ENCODE measurements at regions of chr5 and their contacts with region 1.

Region 1: DNA sequence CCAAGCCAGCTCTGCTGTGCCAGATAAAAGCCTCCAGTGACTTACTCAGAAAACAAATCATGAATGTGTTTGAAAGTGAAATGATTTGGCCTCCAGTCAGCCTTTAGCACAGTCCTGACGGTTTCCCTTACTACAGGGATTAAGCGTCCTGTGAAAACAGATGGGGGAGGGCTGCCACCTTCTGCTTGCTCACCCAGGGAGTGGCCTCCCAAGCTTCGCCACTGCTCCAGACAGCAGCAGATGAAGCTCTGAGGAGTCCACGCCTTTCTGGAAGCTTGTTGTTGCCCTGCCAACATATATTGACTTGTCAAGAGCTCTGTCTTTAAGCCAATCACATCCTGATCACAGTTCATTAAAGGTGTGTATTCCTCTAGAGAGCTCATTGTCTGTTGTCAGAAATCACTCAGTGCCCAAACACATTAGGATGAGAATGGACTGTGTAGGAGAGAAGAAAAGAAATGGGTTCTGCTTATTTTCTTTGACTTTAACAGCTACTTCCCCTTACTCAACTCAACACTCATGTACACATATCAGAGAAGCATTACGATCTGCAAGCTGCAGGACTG is 4.9 kb upstream of the FYB1 start:
- DNase-seq: peak in 1 of 4 donors; percentile 48
- ATAC-seq: no peak
- H3K4me3 ChIP-seq: no peak overlapping the region
- H3K27ac ChIP-seq: peak overlapping the region in 1 of 4 donors; percentile 42
- H3K4me1 ChIP-seq: no peaks in the 10 kb centered on the region
- H3K27me3 ChIP-seq: no peaks in the 10 kb centered on the region
- CTCF ChIP-seq: no peak
- POLR2A ChIP-seq: no peak

Region 2: DNA sequence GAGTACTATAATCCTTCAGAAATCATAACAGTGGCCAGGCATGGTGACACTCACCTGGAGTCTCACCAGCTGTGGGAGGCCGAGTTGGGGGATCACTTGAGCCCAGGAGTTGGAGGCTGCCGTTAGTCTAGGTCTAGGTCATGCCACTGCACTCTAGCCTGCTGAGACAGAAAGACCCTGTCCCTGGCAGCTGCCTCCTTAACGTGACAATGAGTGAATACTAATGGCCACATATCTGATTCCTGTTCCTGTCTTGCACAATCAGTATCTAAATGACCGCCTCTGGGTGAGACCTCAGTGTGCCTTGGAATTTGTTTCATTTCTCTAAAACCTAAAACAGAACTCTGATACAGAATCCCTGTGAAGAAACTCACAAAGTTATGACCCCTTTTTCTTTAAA is 331.5 kb after region 1 on chr5:
- intact Hi-C with region 1: loop called (anchors 10 kb)
- DNase-seq: peak in 1 of 4 donors; percentile 14
- ATAC-seq: no peak
- H3K4me3 ChIP-seq: no peak overlapping the region
- H3K27ac ChIP-seq: no peak overlapping the region
- H3K4me1 ChIP-seq: no peaks in the 10 kb centered on the region
- H3K27me3 ChIP-seq: no peaks in the 10 kb centered on the region
- CTCF ChIP-seq: no peak
- POLR2A ChIP-seq: no peak

Measured in body of pancreas (tissue), 4 donors.